Activated B cell treated with CpG ODN at 0.5 μM for 24 hours (primary cell): ENCODE measurements at regions of chr10 and their contacts with region 1.

Region 1: DNA sequence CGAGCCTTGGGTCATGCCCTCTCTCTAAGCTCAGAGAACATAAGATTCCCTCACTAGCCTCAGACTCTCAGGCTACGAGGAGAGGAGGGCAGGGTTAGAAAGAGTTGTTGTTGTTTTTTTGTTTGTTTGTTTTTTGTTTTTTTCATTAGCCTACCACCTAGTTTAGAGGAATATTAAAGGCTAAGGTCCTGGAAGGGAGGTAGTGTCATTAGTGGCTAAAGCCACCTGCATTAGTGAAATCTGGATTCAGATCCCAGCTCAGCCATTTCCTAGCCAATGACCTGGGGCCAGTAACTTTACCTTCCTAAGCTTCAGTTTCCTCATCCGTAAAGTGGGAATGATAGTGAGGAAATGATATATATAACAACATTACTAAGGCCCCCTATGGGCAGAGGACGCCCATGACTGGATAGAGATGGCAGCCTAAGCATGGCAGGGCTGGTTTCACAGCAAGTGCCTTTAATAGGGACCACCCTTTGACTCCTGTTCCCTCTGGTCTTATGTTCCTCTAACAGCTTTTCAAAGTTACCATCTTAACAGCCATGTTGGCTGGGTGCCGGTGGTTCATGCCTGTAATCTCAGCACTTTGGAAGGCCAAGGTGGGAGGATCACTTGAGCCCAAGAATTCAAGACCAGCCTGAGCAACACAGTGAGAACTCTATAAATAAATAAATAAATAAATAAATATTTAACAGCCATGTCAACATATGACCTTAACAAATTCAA is 5.1 kb downstream of the DDIT4 start:
- DNase-seq: no peak
- ATAC-seq: no peak
- H3K4me3 Mint-ChIP-seq: no peak overlapping the region
- H3K27ac Mint-ChIP-seq: no peak overlapping the region
- H3K4me1 Mint-ChIP-seq: peaks cover 36% of the 10 kb centered on the region
- H3K27me3 Mint-ChIP-seq: no peaks in the 10 kb centered on the region
- CTCF ChIP-seq: no peak

Region 2: GRCh38 chr10:72292223-72292691 is 13.4 kb after region 1 on chr10:
- CTCF ChIA-PET with region 1: interaction called, 21 read pairs
- POLR2A ChIA-PET with region 1: interaction called, 377 read pairs
- intact Hi-C with region 1: loop called (anchors 1 kb)
- DNase-seq: no peak
- ATAC-seq: no peak
- H3K4me3 Mint-ChIP-seq: no peak overlapping the region
- H3K27ac Mint-ChIP-seq: peak overlapping the region; percentile 79
- H3K4me1 Mint-ChIP-seq: peaks cover 53% of the 10 kb centered on the region
- H3K27me3 Mint-ChIP-seq: no peaks in the 10 kb centered on the region
- CTCF ChIP-seq: no peak

Region 3: DNA sequence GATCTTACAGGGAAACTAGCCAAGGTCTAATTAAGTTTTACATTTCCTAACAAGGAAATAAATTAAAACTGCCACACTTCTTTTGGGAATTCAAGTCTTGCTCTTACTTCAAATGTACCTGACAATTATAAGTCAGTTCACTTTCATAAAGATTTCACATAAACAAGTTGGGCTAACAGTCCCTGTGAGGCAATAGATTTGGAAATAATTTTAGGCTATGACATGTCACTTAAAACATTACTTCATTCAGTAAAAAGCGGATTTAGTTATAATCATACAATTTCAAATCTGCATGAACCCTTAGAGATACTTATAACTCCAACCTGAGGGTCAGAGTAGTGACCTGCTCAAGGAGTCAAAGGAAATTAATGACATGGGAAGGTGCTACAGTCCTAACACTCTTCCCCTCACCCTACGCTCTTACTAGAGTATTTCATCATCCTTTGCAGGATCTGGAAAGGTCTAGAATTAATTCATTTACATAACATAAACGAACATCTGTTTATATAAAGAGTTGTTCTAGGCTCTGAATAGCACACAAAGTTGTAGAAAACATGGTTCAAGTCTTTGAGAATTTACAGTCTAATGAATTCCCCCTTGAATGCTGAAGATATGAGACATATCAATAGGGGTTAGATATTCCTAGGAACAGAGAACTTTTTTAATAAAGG is 108.2 kb after region 1 on chr10:
- CTCF ChIA-PET with region 1: no interaction called
- POLR2A ChIA-PET with region 1: no interaction called
- intact Hi-C with region 1: no loop called
- DNase-seq: no peak
- ATAC-seq: no peak
- H3K4me3 Mint-ChIP-seq: no peak overlapping the region
- H3K27ac Mint-ChIP-seq: no peak overlapping the region
- H3K4me1 Mint-ChIP-seq: peaks cover 3% of the 10 kb centered on the region
- H3K27me3 Mint-ChIP-seq: no peaks in the 10 kb centered on the region
- CTCF ChIP-seq: no peak

Region 4: GRCh38 chr10:72605122-72605521 is 326.3 kb after region 1 on chr10:
- CTCF ChIA-PET with region 1: no interaction called
- POLR2A ChIA-PET with region 1: no interaction called
- intact Hi-C with region 1: no loop called
- DNase-seq: no peak
- ATAC-seq: no peak
- H3K4me3 Mint-ChIP-seq: no peak overlapping the region
- H3K27ac Mint-ChIP-seq: no peak overlapping the region
- H3K4me1 Mint-ChIP-seq: peaks cover 6% of the 10 kb centered on the region
- H3K27me3 Mint-ChIP-seq: no peaks in the 10 kb centered on the region
- CTCF ChIP-seq: no peak